GM12878 (cell line): ENCODE measurements at regions of chr1 and their contacts with region 1.

Region 1: GRCh38 chr1:56584910-56585528 is 5.7 kb upstream of the PLPP3 start:
- DNase-seq: no peak
- ATAC-seq: peak; percentile 71
- H3K4me3 ChIP-seq: no peak overlapping the region
- H3K27ac ChIP-seq: no peak overlapping the region
- H3K4me1 ChIP-seq: no peaks in the 10 kb centered on the region
- H3K27me3 ChIP-seq: no peaks in the 10 kb centered on the region
- CTCF ChIP-seq: peak; percentile 71 to 82 (median 78)
- EP300 ChIP-seq: no peak
- POLR2A ChIP-seq: no peak
- RAD21 ChIP-seq: peak; percentile 95

Region 2: DNA sequence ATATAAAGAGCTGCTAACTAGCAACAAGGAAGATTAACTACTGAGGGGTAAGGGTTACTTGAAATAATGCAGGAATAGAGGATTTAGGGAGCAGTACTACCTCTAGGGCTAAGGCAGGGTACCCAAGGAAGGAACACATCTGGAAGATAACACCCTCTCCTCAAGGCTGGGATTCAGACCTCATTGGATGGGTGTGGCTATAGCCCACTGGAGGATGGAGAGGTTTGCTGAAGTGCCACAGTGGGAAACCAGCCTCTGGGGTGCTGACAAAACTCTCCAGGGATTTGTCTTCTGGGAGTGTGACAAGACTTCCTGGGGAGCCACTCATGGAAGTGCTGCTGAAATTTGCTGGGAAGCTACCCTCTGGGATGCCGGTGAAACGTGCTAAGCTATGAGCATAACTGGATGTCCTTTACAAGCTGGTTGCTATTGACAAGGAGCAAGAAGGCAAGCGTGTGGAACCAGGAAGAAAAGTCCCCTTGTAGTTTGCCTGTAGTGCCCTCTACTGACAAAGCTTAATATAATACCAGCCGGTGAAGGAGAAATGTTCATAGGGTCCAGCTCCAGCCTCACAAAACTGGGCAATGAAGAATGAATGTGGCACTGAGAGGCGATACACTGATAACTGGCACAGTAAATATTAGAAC is 1247.1 kb before region 1 on chr1:
- CTCF ChIA-PET with region 1: interaction called, 19 read pairs
- POLR2A ChIA-PET with region 1: no interaction called
- RAD21 ChIA-PET with region 1: interaction called, 11 read pairs
- SMC1A ChIA-PET with region 1: interaction called, 20 read pairs
- in situ Hi-C with region 1: no loop called
- intact Hi-C with region 1: loop called (anchors 5 kb)
- DNase-seq: peak; percentile 13
- ATAC-seq: peak; percentile 95
- H3K4me3 ChIP-seq: no peak overlapping the region
- H3K27ac ChIP-seq: no peak overlapping the region
- H3K4me1 ChIP-seq: no peaks in the 10 kb centered on the region
- H3K27me3 ChIP-seq: peaks cover 0 to 1% of the 10 kb centered on the region in 2 experiments; a peak in 1 of 4 replicates
- CTCF ChIP-seq: peak; percentile 57 to 62 (median 57)
- EP300 ChIP-seq: no peak
- POLR2A ChIP-seq: no peak
- RAD21 ChIP-seq: peak; percentile 69

Region 3: GRCh38 chr1:55868026-55868425 is 717.0 kb before region 1 on chr1:
- CTCF ChIA-PET with region 1: interaction called, 67 read pairs
- POLR2A ChIA-PET with region 1: interaction called, 3 read pairs
- RAD21 ChIA-PET with region 1: interaction called, 29 read pairs
- SMC1A ChIA-PET with region 1: interaction called, 57 read pairs
- in situ Hi-C with region 1: loop called (anchors 10 kb)
- intact Hi-C with region 1: no loop called
- DNase-seq: no peak
- ATAC-seq: no peak
- H3K4me3 ChIP-seq: no peak overlapping the region
- H3K27ac ChIP-seq: no peak overlapping the region
- H3K4me1 ChIP-seq: no peaks in the 10 kb centered on the region
- H3K27me3 ChIP-seq: no peaks in the 10 kb centered on the region; a peak in 1 of 4 replicates
- CTCF ChIP-seq: no peak; a peak in 1 of 6 replicates
- EP300 ChIP-seq: no peak
- POLR2A ChIP-seq: no peak
- RAD21 ChIP-seq: no peak

Region 4: DNA sequence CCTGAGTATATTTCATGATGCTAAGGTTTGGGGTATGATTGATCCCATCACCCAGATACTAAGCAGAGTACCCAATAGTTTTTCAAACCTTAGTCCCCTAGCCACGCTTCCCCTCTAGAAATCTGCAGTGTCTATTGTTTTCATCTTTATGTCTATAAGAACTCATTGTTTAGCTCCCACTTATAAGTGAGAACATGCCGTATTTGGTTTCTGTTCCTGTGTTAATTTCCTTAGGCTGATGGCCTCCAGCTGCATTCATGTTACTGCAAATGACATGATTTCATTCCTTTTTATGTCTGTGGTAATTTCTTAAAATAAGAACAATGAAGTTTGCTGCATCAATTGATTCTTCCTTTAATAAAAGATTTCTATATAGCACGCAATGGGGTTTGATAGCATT is 307.0 kb before region 1 on chr1:
- CTCF ChIA-PET with region 1: interaction called, 17 read pairs
- POLR2A ChIA-PET with region 1: no interaction called
- RAD21 ChIA-PET with region 1: interaction called, 7 read pairs
- SMC1A ChIA-PET with region 1: interaction called, 5 read pairs
- in situ Hi-C with region 1: no loop called
- intact Hi-C with region 1: no loop called
- DNase-seq: no peak
- ATAC-seq: peak; percentile 62
- H3K4me3 ChIP-seq: no peak overlapping the region
- H3K27ac ChIP-seq: no peak overlapping the region
- H3K4me1 ChIP-seq: no peaks in the 10 kb centered on the region
- H3K27me3 ChIP-seq: no peaks in the 10 kb centered on the region
- CTCF ChIP-seq: no peak
- EP300 ChIP-seq: peak in 1 of 2 experiments; percentile 62; a peak in 1 of 4 replicates
- POLR2A ChIP-seq: no peak
- RAD21 ChIP-seq: no peak

Region 5: GRCh38 chr1:56477164-56478111 is 107.6 kb before region 1 on chr1:
- CTCF ChIA-PET with region 1: interaction called, 209 read pairs
- POLR2A ChIA-PET with region 1: interaction called, 3 read pairs
- RAD21 ChIA-PET with region 1: interaction called, 266 read pairs
- SMC1A ChIA-PET with region 1: interaction called, 348 read pairs
- in situ Hi-C with region 1: no loop called
- intact Hi-C with region 1: no loop called
- DNase-seq: peak; percentile 17
- ATAC-seq: peak; percentile 75
- H3K4me3 ChIP-seq: no peak overlapping the region
- H3K27ac ChIP-seq: no peak overlapping the region
- H3K4me1 ChIP-seq: peaks cover 8% of the 10 kb centered on the region; the same call in 1 of the 2 replicates
- H3K27me3 ChIP-seq: peaks cover 0 to 5% of the 10 kb centered on the region in 2 experiments; a peak in 2 of 4 replicates
- CTCF ChIP-seq: no peak
- EP300 ChIP-seq: 0 out of 4 replicates have a peak, but pooled peaks of 1 of the 2 experiments have one; percentile 22
- POLR2A ChIP-seq: no peak
- RAD21 ChIP-seq: no peak

Region 6: GRCh38 chr1:56709269-56709880 is 124.4 kb after region 1 on chr1:
- CTCF ChIA-PET with region 1: interaction called, 32 read pairs
- POLR2A ChIA-PET with region 1: no interaction called
- RAD21 ChIA-PET with region 1: interaction called, 14 read pairs
- SMC1A ChIA-PET with region 1: interaction called, 7 read pairs
- in situ Hi-C with region 1: no loop called
- intact Hi-C with region 1: loop called (anchors 5 kb)
- DNase-seq: no peak
- ATAC-seq: peak; percentile 85
- H3K4me3 ChIP-seq: no peak overlapping the region
- H3K27ac ChIP-seq: no peak overlapping the region
- H3K4me1 ChIP-seq: no peaks in the 10 kb centered on the region
- H3K27me3 ChIP-seq: no peaks in the 10 kb centered on the region
- CTCF ChIP-seq: peak; percentile 33 to 57 (median 44); a peak in 4 of 6 replicates
- EP300 ChIP-seq: no peak
- POLR2A ChIP-seq: no peak
- RAD21 ChIP-seq: peak; percentile 45